ENCODE measurements at regions of chr12 and their contacts with region 1.

Region 1: DNA sequence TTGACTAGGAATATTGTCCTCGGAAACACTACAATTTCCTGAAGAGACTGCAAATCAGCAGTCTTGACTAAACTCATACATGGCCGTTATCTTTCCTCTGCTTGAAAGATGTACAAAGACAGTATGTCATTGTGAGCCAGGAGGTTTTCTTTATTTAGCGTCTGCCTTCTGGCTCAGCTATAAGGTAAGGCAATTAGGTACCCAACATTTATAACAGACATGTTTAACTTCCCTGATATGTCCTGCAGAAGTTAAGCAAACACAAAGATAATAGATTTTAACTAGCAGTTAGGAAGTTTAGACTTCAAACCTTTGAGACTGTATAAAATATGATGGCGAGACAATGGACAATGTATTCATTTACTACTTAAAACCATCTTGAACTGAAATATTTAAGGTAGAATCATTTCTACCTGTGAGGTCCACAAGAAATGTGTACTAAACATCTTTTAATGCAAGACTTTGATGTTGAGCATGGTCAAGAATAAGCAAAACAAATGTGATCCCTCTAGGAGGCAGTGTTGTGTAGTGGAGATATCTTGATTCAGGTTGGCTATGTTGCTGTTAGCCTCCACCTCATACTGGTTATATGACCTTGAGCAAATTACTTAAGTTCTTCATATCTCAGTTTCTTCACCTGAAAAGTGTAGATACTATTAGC is 96.2 kb upstream of the EEA1 start:
- DNase-seq: no peak
- H3K4me3 ChIP-seq: no peak overlapping the region
- H3K27ac ChIP-seq: no peak overlapping the region
- H3K4me1 ChIP-seq: peaks cover 0 to 5% of the 10 kb centered on the region in 2 donors
- H3K27me3 ChIP-seq: no peaks in the 10 kb centered on the region
- CTCF ChIP-seq: peak in 5 of 6 experiments; percentile 27 to 59 (median 53)
- POLR2A ChIP-seq: no peak

Region 2: GRCh38 chr12:92987362-92987761 is 37.9 kb before region 1 on chr12:
- intact Hi-C with region 1: no loop called
- DNase-seq: peak in 6 of 7 donors; percentile 30 to 58 (median 44)
- H3K4me3 ChIP-seq: no peak overlapping the region
- H3K27ac ChIP-seq: peak overlapping the region; percentile 67 to 78 (median 72)
- H3K4me1 ChIP-seq: peaks cover 19 to 20% of the 10 kb centered on the region in 2 donors
- H3K27me3 ChIP-seq: no peaks in the 10 kb centered on the region
- CTCF ChIP-seq: peak; percentile 38 to 84 (median 74)
- POLR2A ChIP-seq: no peak

Region 3: GRCh38 chr12:93127582-93128331 is 102.5 kb after region 1 on chr12:
- intact Hi-C with region 1: loop called in 1 of 2 experiments (anchors 5 kb)
- DNase-seq: peak in 6 of 7 donors; percentile 28 to 71 (median 43)
- H3K4me3 ChIP-seq: no peak overlapping the region
- H3K27ac ChIP-seq: peak overlapping the region in 2 of 5 donors; percentile 27 to 73
- H3K4me1 ChIP-seq: peaks cover 1 to 10% of the 10 kb centered on the region in 2 donors
- H3K27me3 ChIP-seq: no peaks in the 10 kb centered on the region
- CTCF ChIP-seq: peak in 3 of 6 experiments; percentile 15 to 38 (median 37)
- POLR2A ChIP-seq: no peak

Region 4: GRCh38 chr12:93243689-93244513 is 218.6 kb after region 1 on chr12:
- intact Hi-C with region 1: loop called in 1 of 2 experiments (anchors 10 kb)
- DNase-seq: peak in 6 of 7 donors; percentile 48 to 77 (median 60)
- H3K4me3 ChIP-seq: no peak overlapping the region
- H3K27ac ChIP-seq: peak overlapping the region in 2 of 5 donors; percentile 43 to 56
- H3K4me1 ChIP-seq: peaks cover 11 to 16% of the 10 kb centered on the region in 2 donors
- H3K27me3 ChIP-seq: no peaks in the 10 kb centered on the region
- CTCF ChIP-seq: no peak
- POLR2A ChIP-seq: no peak